ENCODE measurements at regions of chr11 and their contacts with region 1.

Region 1: GRCh38 chr11:58579192-58580129 is 598 bp downstream of the ZFP91 start:
- DNase-seq: peak; percentile 95
- H3K4me3 Mint-ChIP-seq: peak overlapping the region; percentile 100
- H3K27ac Mint-ChIP-seq: peak overlapping the region; percentile 99
- H3K4me1 Mint-ChIP-seq: peaks cover 53% of the 10 kb centered on the region
- H3K27me3 Mint-ChIP-seq: no peaks in the 10 kb centered on the region

Region 2: DNA sequence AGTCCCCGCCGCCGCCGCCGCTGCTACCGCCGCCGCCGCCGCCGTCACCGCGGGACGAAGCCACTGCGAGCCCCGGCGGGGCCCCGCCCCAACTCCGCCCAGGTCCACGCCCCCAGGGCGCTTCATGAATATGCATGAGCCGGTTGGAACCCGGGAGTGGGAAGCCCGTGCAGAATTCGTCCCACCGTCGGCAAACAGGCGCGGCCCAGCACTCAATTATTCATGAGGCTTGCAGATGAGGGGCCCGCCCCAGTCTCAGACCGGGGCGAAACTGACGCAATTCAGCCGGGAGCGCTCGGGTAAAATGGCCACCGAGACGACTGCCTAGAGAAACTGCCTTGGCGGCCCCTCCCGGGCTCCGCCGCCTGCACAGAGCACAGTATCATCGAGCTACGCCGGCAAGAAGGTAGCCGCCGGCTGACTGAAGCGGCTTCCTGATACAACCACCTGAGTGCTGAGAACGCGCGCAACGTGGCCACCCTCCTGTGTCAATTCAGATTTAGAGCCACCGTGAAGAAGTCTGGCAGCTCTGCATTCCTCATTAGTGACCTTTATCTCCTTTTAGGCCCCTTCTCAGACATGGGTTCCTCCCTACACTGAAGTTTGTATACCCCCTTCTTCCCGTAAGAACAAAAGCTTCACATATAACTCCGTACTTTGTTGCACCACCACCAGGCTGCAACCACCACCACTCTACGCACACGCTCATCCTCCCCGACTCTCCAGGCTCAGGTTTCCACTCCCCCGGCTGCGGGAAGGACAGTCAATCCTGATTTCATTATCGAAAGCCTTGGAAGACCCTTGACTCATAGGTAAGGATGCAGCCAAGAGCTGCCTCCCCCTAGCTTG is 1254.4 kb before region 1 on chr11 and contains the start of gene TNKS1BP1:
- CTCF ChIA-PET with region 1: no interaction called
- intact Hi-C with region 1: loop called (anchors 2 kb)
- DNase-seq: peak; percentile 95
- H3K4me3 Mint-ChIP-seq: peak within 1 kb of the TSS; percentile 82
- H3K27ac Mint-ChIP-seq: peak within 1 kb of the TSS; percentile 94
- H3K4me1 Mint-ChIP-seq: peaks cover 56% of the 10 kb centered on the region
- H3K27me3 Mint-ChIP-seq: no peaks in the 10 kb centered on the region
- total RNA-seq, gene TNKS1BP1: 14.1 to 14.7 TPM

Region 3: GRCh38 chr11:57667736-57668435 is 911.6 kb before region 1 on chr11 and contains the start of gene ZDHHC5:
- CTCF ChIA-PET with region 1: no interaction called
- intact Hi-C with region 1: loop called (anchors 1 kb)
- DNase-seq: peak; percentile 99
- H3K4me3 Mint-ChIP-seq: peak within 1 kb of the TSS; percentile 91
- H3K27ac Mint-ChIP-seq: peak within 1 kb of the TSS; percentile 97
- H3K4me1 Mint-ChIP-seq: peaks cover 43% of the 10 kb centered on the region
- H3K27me3 Mint-ChIP-seq: no peaks in the 10 kb centered on the region
- total RNA-seq, gene ZDHHC5: 38.5 to 46.6 TPM

Region 4: GRCh38 chr11:58490827-58491226 is 88.6 kb before region 1 on chr11:
- CTCF ChIA-PET with region 1: no interaction called
- intact Hi-C with region 1: no loop called
- DNase-seq: no peak
- H3K4me3 Mint-ChIP-seq: no peak overlapping the region
- H3K27ac Mint-ChIP-seq: no peak overlapping the region
- H3K4me1 Mint-ChIP-seq: peaks cover 3% of the 10 kb centered on the region
- H3K27me3 Mint-ChIP-seq: no peaks in the 10 kb centered on the region

Region 5: DNA sequence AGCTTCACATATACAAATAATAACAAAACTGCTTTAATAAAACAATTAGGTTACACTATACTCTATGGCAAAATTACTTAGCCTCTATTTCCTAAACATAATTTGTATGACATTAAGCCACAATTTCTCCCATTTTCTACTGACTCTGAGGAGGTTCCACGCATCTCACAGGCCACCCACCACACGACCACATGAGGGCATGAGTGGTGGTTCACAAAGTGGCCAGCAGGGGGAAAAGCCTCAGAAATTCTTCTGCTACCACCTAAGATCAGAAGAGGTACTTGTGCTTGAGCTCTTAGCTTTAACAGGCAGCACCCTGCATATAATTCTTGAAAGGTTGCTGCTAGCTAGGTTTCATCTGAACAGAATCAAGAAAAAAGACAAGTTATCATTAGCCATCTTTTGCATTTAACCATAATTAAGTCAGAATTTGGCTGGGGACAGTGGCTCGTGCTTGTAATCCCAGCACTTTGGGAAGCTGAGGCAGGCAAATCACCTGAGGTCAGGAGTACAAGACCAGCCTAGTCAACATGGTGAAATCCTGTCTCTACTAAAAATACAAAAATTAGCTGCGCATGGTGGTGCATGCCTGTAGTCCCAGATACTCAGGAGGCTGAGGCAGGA is 11.5 kb before region 1 on chr11:
- CTCF ChIA-PET with region 1: interaction called, 23 read pairs
- intact Hi-C with region 1: no loop called
- DNase-seq: peak; percentile 83
- H3K4me3 Mint-ChIP-seq: peak overlapping the region; percentile 0
- H3K27ac Mint-ChIP-seq: peak overlapping the region; percentile 67
- H3K4me1 Mint-ChIP-seq: peaks cover 63% of the 10 kb centered on the region
- H3K27me3 Mint-ChIP-seq: no peaks in the 10 kb centered on the region

Region 6: DNA sequence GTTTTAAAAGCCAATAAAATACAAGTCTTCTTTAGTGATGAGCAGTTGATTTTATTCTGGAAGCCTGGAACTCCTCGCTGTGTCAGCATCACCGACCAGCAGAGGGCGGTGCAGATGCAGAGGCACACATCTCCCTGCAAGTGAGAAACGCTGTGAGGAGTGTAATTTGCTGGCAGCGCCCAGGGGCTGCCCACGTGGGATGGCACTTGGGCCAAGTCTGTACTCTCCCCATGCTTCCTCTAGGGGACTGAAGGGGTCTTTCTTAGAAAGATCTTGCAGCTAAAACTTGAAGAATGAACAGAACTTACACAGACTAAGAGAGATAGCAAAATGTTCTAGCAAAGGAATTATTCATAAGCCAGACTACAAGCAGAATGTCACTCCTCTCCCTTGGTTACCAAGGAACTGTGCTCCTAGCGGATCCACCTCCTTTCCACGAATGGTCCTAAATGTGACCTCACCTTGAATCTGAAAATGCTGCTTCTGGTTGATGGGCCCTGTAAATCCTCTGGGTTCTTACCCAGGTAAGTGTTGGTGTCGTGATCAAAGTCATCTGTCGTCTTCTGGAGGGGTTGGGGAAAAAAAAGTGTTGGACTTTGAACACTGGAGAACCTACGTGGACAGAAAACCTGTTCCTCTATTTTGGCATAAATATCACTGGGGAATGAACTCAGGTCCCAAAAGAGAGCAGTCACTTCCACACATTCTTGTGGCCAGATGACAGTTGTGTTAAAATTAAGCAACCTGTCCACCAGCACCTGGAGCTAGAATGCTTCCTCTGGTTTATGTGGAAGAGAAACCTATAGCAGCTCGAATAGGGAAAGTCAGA is 74.8 kb after region 1 on chr11:
- CTCF ChIA-PET with region 1: interaction called, 5 read pairs
- intact Hi-C with region 1: loop called (anchors 1 kb)
- DNase-seq: peak; percentile 89
- H3K4me3 Mint-ChIP-seq: no peak overlapping the region
- H3K27ac Mint-ChIP-seq: no peak overlapping the region
- H3K4me1 Mint-ChIP-seq: peaks cover 18% of the 10 kb centered on the region
- H3K27me3 Mint-ChIP-seq: no peaks in the 10 kb centered on the region

Region 7: DNA sequence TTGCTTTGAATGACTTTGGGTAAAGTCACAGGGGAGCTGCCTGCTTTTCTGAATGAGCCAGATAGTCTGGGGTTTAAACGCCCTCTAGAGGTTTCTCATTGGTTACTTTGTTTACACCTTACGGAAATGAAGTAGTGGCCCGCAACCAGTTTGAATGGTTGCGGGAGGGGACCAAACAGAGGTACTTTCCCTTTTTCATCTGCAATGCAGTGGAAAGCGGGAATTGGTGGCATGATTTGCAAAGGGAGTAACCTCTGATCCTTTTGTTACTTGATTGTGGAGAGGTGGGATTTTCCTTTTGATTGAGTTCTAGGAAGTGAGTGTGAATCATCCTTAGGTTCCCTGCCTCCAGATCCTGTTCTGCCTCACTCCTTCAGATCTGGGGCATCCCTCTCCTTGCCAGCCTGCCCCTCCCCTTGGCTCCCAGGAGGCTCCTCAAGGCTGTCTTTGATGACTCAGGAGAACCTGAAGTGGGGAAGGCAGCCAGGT is 343.9 kb after region 1 on chr11:
- CTCF ChIA-PET with region 1: no interaction called
- intact Hi-C with region 1: loop called (anchors 5 kb)
- DNase-seq: peak; percentile 61
- H3K4me3 Mint-ChIP-seq: no peak overlapping the region
- H3K27ac Mint-ChIP-seq: peak overlapping the region; percentile 11
- H3K4me1 Mint-ChIP-seq: peaks cover 25% of the 10 kb centered on the region
- H3K27me3 Mint-ChIP-seq: no peaks in the 10 kb centered on the region

Region 8: DNA sequence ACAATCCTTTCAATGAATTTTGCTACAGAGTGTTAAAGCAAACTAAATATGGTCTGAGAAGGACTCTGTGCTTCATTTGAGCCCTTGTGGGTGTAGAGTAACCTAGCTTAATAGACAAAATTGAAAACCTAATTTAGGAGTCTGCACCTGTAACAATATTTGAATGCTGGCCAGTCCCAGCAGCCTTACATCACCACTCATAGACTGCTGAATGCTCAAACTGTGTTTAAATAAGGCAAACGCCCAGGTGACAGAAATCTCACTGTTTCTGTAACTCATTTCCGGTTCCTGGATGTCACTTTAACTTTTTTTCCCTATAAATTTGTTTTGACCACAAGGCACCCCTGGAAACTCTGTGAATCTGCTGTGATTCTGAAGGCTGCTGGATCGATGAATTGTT is 461.1 kb after region 1 on chr11:
- CTCF ChIA-PET with region 1: no interaction called
- intact Hi-C with region 1: no loop called
- DNase-seq: no peak
- H3K4me3 Mint-ChIP-seq: no peak overlapping the region
- H3K27ac Mint-ChIP-seq: no peak overlapping the region
- H3K4me1 Mint-ChIP-seq: no peaks in the 10 kb centered on the region
- H3K27me3 Mint-ChIP-seq: peaks cover 6% of the 10 kb centered on the region

Region 9: GRCh38 chr11:59560702-59561469 is 981.4 kb after region 1 on chr11:
- CTCF ChIA-PET with region 1: no interaction called
- intact Hi-C with region 1: loop called (anchors 1 kb)
- DNase-seq: peak; percentile 90
- H3K4me3 Mint-ChIP-seq: peak overlapping the region; percentile 93
- H3K27ac Mint-ChIP-seq: peak overlapping the region; percentile 97
- H3K4me1 Mint-ChIP-seq: peaks cover 47% of the 10 kb centered on the region
- H3K27me3 Mint-ChIP-seq: peaks cover 4% of the 10 kb centered on the region